ENCODE measurements at regions of chr20 and their contacts with region 1.

Region 1: GRCh38 chr20:57654363-57654997 is 34.3 kb upstream of the ZBP1 start:
- DNase-seq: no peak
- ATAC-seq: peak; percentile 72 to 80

Region 2: DNA sequence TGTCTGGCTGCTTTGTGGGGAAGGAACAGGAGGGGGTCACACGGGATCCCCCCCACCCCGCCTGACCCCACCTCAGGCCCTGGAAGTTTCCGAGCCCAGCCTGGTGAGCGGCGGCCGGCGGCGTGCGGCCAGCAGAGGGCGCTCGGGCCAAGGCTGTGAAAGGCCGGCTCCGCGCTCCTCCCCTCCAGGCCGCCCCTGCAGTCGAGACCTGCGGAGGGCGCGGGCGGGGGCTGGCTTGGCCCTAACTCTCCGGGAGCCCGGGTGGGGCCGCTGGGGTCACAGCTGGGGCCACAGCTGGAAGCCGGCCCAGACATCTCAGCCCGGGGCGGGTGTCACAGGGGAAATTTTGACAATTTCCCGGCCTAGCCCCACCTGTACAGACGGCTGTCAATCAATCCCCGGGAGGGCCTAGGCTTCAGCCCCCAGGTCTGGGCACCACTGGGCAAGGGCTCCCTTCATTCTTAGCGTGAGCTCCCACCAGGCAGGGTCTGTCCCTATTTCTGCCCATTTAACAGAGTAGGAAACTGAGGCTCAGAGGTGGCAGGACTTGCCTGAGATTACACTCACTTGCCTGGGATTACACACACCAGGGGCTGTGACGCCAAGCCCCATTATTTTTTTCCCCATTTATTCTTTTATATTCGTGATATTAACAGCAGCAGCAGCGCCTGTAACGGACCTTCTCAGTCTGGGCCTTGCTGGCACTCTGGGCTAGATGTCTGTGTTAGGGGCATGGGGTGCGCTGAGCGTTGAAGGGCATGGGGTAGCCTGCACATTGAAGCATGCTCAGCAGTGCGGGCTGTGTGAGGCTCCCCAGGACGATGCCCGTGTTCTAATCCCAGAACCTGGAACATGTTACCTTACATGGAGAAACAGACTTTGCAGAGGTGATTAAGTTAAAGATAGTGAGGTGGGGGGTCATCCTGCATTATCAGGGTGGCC is 57.2 kb before region 1 on chr20:
- intact Hi-C with region 1: no loop called
- DNase-seq: peak; percentile 77
- ATAC-seq: peak; percentile 81 to 87

Region 3: DNA sequence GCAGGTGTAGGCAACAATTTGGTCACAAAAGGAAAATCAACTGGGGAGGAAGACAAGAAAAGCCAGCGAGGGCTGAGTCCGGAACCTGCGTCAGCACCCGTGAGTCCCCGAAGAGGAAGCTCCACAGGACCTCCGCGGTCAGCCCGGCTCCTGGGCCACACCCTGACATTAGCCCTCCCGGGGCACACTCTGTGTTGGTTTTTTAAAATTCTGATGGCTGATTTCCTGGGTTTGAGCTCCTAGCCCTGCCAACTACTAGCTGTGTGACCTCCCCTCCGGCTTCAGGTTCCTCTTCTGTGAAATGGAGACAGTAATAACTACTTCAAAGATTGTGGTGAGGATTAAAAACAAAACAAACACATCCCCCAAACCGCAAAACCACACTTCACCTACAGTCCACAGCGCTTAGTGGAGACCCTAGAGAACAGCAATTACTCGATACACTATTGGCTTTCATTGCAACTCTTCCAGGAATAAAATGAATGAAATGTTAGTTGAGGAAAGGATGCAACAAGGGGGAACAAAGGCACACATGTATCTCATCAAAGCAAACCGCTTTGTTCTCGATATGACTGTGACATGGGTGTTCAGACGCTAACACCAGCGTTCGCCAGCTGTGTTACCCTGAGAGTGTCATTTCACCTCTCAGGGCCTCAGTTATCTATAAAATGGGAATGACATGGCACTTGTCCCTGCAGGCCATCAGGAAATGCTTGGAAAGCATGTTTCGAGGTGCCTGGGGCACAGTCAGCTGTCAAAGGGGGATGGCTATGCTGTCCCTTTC is 35.2 kb before region 1 on chr20:
- intact Hi-C with region 1: no loop called
- DNase-seq: peak; percentile 50
- ATAC-seq: peak; percentile 58 to 63

Region 4: GRCh38 chr20:57709931-57710799 is 55.7 kb after region 1 on chr20 and contains the start of gene PMEPA1:
- intact Hi-C with region 1: loop called in 1 of 2 experiments (anchors 5 kb)
- DNase-seq: peak; percentile 96
- ATAC-seq: peak; percentile 92 to 94
- total RNA-seq, gene PMEPA1: 28.3 to 60.3 TPM

Region 5: GRCh38 chr20:57866221-57867106 is 212.0 kb after region 1 on chr20:
- intact Hi-C with region 1: no loop called
- DNase-seq: no peak
- ATAC-seq: peak in 1 of 2 donors; percentile 30

Region 6: DNA sequence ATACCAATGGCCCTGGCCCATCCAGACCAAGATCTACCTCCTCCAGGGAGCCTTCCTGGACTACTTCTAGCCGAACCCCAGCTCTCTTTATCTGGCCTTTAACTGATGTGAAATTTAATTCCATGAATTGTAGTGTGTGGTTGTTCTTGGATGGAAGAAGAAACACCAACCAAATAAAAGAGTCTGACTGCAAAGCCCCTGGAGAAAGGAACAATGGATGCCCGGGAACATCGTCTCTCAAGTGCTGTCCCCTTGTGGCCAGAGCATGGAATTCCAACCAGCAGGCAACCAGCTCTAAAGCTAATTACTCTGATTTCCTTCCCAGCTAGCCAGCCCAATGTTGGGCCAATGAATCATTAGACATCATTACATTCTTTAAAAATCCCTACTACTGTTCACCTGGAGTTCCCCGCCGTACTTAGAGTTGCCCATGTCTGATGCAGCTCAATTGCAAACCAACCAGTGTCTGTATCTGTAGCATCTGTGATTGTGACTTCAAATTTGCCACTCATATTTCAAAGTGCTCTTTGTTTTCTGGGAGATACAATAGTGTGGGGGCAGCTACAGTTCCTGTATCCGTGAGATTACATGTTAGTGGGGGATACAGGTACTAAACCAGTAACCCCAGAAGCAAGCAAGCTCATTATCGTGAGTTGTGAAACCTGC is 432.8 kb after region 1 on chr20:
- intact Hi-C with region 1: loop called (anchors 5 kb)
- DNase-seq: no peak
- ATAC-seq: peak in 1 of 2 donors; percentile 51

Region 7: GRCh38 chr20:58179432-58180099 is 525.1 kb after region 1 on chr20:
- intact Hi-C with region 1: loop called in 1 of 2 experiments (anchors 2 kb)
- DNase-seq: peak; percentile 59
- ATAC-seq: peak; percentile 80 to 84

Measured in left cardiac atrium (tissue), 4 donors.